Activated naive CD8-positive, alpha-beta T cell treated with anti-CD3 and anti-CD28 coated beads, Interleukin-2, amount 10 ng/mL, durations not matched to agents 7 days and 5 days (primary cell): ENCODE measurements at regions of chr10 and their contacts with region 1.

Region 1: GRCh38 chr10:72273410-72274212 is at the start of gene DDIT4:
- DNase-seq: peak; percentile 98
- ATAC-seq: peak; percentile 91
- H3K4me3 Mint-ChIP-seq: peak within 1 kb of the TSS; percentile 93
- H3K27ac Mint-ChIP-seq: peak within 1 kb of the TSS; percentile 93
- H3K4me1 Mint-ChIP-seq: peaks cover 47% of the 10 kb centered on the region
- H3K27me3 Mint-ChIP-seq: no peaks in the 10 kb centered on the region
- total RNA-seq, gene DDIT4: 150 to 159 TPM

Region 2: DNA sequence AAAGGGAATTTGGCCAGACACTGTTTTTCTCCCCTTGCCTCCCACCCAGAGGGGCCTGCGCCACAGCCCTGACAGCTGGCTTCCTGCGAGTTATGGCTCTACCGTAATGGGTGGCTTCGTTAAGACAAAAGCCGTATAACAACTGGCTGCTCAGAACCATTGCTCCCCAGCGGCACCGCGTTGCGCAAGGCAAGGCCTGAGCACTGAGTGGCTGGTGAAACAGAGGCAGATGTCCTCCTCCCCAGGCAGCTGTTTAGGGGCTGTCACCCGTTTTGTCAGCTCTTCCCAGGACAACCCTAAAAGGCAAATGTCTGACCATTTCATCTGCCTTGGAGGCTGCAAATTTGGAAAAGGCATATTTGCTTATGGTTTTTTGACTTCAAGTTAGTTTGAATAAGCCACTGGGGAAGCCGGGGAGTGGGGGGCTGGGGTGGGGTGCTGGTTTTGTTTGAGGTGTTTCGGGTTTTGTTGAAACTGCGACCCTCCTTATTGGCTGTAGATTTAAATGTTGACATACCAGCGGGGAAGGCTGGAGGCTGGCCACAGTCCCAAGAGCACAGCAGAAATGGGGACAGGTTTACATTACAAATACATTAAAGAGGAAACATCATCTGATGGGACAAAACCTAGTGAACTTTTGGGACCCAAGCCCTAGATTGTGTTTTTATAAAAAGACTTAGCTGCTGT is 184.6 kb before region 1 on chr10:
- POLR2A ChIA-PET with region 1: interaction called, 32 read pairs
- DNase-seq: peak; percentile 71
- ATAC-seq: peak; percentile 52
- H3K4me3 Mint-ChIP-seq: peak overlapping the region; percentile 98
- H3K27ac Mint-ChIP-seq: peak overlapping the region; percentile 99
- H3K4me1 Mint-ChIP-seq: peaks cover 46% of the 10 kb centered on the region
- H3K27me3 Mint-ChIP-seq: no peaks in the 10 kb centered on the region

Region 3: DNA sequence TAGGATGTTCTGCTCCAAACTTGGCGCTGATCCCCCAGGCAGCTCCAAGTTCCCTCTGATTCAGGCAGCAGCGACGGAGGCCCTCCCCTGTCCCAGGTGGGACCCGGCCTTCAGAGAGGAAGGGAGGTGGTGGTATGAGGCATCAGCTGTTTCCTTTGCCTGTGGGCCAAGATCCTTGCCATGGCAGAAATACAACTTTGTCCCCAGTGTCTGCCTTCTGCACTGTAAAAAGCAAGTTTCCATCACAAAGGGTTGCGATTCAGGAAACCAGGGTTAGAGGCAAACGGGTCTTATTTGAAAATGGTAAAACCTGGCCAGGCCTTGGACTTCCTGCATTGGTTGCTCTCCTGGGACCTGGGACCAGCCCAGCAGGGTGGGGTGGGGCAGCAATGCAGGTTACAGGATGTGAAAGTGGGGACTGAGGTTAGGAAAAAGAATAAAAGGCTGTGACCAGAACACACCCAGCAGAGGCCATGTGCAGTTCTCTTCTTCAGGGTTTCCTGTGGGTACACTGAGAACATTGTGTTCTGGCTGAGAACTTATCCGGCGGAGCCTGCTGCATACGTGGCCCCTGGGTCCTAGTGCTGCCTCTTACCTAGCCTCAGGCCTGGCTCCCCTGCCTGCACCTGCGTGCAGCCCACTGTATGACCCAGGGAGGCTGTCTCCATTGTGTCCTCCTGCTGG is 25.0 kb before region 1 on chr10:
- POLR2A ChIA-PET with region 1: interaction called, 256 read pairs
- DNase-seq: peak; percentile 77
- ATAC-seq: peak; percentile 87
- H3K4me3 Mint-ChIP-seq: peak overlapping the region; percentile 86
- H3K27ac Mint-ChIP-seq: peak overlapping the region; percentile 93
- H3K4me1 Mint-ChIP-seq: peaks cover 71% of the 10 kb centered on the region
- H3K27me3 Mint-ChIP-seq: no peaks in the 10 kb centered on the region

Region 4: DNA sequence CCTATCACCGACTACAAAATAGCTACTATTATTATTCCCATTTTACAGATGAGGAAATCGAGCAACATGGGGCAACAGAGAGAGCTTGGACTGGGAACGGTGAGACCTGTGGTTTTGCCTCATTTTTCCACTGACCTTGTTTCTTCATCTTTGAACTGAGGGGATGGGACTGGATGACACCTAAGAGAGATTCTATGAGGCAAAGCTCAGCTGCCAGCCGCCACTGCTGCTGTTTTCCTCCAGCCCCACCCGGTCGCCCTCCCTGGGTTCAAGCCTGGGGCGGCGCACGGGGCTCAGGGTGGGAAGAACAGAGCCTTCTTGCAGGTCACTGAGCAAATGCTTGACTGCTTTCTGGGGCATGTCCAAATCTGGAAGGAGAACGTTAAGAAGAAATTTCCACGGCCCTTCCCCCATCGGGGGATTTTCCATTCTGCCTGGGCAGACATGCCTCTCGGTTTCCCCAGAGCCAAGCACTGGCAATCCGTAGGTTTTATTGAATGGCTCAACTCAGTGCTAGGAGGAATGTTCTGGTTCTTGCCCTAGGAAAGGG is 12.4 kb after region 1 on chr10:
- POLR2A ChIA-PET with region 1: interaction called, 231 read pairs
- DNase-seq: no peak
- ATAC-seq: no peak
- H3K4me3 Mint-ChIP-seq: no peak overlapping the region
- H3K27ac Mint-ChIP-seq: peak overlapping the region; percentile 67
- H3K4me1 Mint-ChIP-seq: peaks cover 29% of the 10 kb centered on the region
- H3K27me3 Mint-ChIP-seq: no peaks in the 10 kb centered on the region

Region 5: DNA sequence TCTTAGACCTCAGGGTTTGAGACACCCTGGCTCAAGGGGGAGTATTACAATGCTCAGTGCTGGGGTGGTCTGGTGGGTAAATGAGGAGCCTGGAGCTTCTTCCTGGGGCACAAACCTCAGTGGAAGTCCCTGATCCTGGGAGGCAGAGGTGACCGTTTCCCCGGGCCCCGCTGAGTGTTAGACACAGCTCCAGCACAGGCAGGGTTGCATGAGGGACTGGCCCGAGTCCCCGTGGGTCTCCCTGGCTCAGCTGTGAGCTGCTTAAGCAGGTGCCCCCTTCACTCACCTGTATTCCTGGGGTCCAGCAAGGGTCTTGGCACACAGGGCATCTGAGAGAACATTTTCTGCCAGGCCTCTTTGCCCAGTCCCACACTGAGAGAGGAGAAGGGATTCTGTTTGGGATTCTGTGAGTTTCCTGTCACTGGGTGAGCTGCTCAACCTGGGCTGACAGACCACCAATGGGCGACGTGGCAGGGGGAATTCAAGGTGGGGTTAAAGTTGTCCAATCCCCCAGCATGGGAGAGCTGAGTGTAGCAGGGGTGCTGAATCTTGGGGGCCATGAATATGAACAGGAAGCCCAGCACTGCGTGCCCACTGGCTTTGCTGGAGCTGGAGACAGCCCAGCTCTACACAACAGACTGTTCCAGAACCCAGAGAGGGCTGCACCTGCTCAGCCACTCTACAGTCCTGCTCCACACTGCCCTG is 30.0 kb after region 1 on chr10:
- POLR2A ChIA-PET with region 1: interaction called, 1,812 read pairs
- DNase-seq: no peak
- ATAC-seq: no peak
- H3K4me3 Mint-ChIP-seq: no peak overlapping the region
- H3K27ac Mint-ChIP-seq: peak overlapping the region; percentile 85
- H3K4me1 Mint-ChIP-seq: peaks cover 54% of the 10 kb centered on the region
- H3K27me3 Mint-ChIP-seq: no peaks in the 10 kb centered on the region